ENCODE measurements at regions of chr19 and their contacts with region 1.

Region 1: DNA sequence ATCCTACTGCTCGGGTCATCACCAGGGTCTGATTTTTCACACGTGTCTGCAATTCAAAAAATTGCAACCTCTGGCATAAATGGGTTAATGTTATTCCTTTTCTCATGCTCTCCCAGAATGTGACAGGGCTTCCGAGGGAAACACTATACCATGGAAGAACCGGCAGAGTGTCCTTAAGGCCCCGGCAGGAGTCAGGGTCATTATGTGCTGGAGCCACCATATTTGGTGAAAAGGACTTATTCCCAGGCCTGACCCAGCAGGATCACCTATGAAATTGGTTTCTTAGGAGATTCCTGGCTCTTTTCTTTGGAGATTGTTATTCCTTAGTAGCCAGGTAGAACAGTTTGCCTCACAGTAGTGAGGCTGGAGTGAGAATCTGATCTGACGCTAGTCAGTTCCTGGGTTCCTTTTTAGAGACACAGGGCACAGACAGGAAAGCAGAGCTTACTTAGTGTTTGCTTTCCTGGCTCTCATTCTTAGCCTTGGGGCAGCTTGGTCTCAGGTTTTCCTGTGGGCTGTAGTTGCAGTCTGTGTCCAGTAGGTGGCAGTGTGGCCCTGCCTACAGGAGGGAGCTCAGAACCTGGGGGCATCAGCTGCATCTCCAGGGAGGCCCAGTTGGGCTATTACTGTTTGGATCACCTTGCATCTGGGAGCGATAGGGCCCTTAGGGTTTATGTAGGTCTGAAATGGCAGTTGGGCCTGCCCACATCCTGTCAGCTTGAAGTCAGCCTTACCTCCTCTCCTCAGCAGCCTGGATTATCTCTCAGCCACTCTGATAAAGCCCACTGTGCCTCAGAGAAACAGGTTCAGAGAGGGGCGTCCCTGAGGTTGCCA is 12.4 kb downstream of the SNRNP70 start:
- DNase-seq: peak; percentile 90
- H3K4me3 ChIP-seq: no peak overlapping the region
- H3K27ac ChIP-seq: no peak overlapping the region
- H3K4me1 ChIP-seq: peaks cover 7% of the 10 kb centered on the region
- H3K27me3 ChIP-seq: no peaks in the 10 kb centered on the region
- CTCF ChIP-seq: peak; percentile 99

Region 2: GRCh38 chr19:49127674-49128544 is 30.2 kb after region 1 on chr19:
- CTCF ChIA-PET with region 1: no interaction called
- POLR2A ChIA-PET with region 1: interaction called, 17 read pairs
- intact Hi-C with region 1: no loop called
- DNase-seq: peak; percentile 98
- H3K4me3 ChIP-seq: peak overlapping the region; percentile 49
- H3K27ac ChIP-seq: no peak overlapping the region
- H3K4me1 ChIP-seq: peaks cover 18% of the 10 kb centered on the region
- H3K27me3 ChIP-seq: no peaks in the 10 kb centered on the region
- CTCF ChIP-seq: no peak

Region 3: GRCh38 chr19:49210108-49210900 is 112.6 kb after region 1 on chr19:
- CTCF ChIA-PET with region 1: interaction called, 17 read pairs
- POLR2A ChIA-PET with region 1: interaction called, 3 read pairs
- intact Hi-C with region 1: loop called (anchors 5 kb)
- DNase-seq: peak; percentile 96
- H3K4me3 ChIP-seq: peak overlapping the region; percentile 67
- H3K27ac ChIP-seq: peak overlapping the region; percentile 99
- H3K4me1 ChIP-seq: peaks cover 32% of the 10 kb centered on the region
- H3K27me3 ChIP-seq: no peaks in the 10 kb centered on the region
- CTCF ChIP-seq: 0 out of 2 replicates have a peak, but pooled peaks have one; percentile 12

Region 4: DNA sequence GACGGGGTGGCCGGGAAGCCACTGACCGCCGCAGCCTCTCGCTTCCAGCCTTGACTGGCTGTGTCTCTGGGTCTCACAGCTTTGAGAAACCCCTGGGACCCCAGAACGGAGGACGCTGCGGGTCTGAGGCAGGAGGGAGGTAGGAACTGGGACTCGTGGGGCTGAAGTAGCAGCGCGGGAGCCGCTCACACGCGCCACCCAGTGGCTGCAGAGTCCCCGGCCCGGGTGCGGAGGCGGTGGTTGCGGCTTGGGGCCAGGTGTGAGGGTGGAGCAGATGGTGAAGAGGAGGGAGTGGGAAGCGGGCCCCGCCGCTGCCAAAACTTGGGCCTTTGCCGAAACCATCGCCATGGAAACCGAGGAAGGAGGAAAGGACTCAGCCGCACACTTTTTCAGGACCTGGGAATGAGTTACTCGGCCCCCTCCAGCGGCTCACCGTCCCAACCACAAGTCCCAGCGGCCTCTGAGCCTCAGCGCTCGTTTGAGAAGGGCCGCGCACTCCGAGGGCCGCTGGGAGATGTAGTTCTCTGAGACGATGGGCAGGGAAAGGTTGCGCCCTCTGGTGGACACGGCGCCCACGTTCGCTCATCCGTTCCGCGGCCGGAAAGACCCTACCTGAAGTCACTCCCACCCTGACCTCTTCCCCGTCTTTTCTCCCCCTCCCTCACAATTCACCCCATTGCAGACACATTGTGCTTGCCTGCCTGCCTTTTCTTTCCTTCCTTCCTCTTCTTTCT is 345.9 kb after region 1 on chr19:
- CTCF ChIA-PET with region 1: no interaction called
- POLR2A ChIA-PET with region 1: no interaction called
- intact Hi-C with region 1: loop called (anchors 5 kb)
- DNase-seq: peak; percentile 98
- H3K4me3 ChIP-seq: peak overlapping the region; percentile 68
- H3K27ac ChIP-seq: peak overlapping the region; percentile 82
- H3K4me1 ChIP-seq: peaks cover 29% of the 10 kb centered on the region
- H3K27me3 ChIP-seq: peaks cover 27% of the 10 kb centered on the region
- CTCF ChIP-seq: peak; percentile 94